ENCODE measurements at regions of chr11 and their contacts with region 1.

Region 1: GRCh38 chr11:123407130-123407995 is 22.7 kb upstream of the GRAMD1B start:
- DNase-seq: peak; percentile 41
- ATAC-seq: peak; percentile 83
- H3K4me3 Mint-ChIP-seq: peak overlapping the region; percentile 75
- H3K27ac Mint-ChIP-seq: peak overlapping the region; percentile 31
- H3K4me1 Mint-ChIP-seq: peaks cover 36% of the 10 kb centered on the region
- H3K27me3 Mint-ChIP-seq: no peaks in the 10 kb centered on the region

Region 2: GRCh38 chr11:123357961-123358841 is 49.2 kb before region 1 on chr11:
- POLR2A ChIA-PET with region 1: no interaction called
- DNase-seq: peak; percentile 68
- ATAC-seq: peak; percentile 92
- H3K4me3 Mint-ChIP-seq: peak overlapping the region; percentile 100
- H3K27ac Mint-ChIP-seq: peak overlapping the region; percentile 94
- H3K4me1 Mint-ChIP-seq: peaks cover 46% of the 10 kb centered on the region
- H3K27me3 Mint-ChIP-seq: peaks cover 18% of the 10 kb centered on the region

Region 3: DNA sequence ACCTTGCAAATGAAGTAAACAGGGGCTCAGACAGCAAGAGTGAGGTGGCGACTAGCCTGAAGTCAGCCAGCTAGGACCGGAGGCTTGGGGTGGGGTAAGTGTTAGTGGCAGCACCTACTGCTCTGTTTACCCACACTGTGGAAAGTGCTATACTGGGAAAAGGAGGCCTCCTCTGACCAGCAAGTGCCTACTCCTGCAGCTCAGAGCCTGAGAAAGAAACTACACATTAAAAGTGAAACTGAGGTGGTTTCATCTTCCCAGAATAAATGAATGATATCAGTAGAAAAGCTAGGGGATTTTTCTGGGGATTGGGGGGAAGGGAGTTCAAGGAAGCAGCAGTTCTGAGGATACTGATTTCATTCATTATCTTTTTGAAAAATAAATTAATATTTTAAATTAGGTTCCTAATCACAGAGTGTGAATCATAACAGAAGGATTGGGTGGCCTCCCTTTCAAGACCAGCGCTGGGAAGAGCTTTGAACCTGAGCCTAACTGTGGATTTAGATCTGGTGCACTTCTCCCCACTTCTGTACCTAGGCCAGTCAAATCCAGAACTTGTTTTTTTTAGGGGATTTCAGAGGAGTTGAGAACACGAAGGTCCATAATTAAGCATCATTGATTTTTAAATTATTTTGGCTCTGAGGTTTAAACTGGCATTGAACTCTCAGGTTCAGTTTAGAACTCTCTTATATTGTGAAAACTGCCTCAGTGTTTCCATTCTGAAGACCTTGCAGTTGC is 25.4 kb before region 1 on chr11:
- POLR2A ChIA-PET with region 1: no interaction called
- DNase-seq: peak; percentile 49
- ATAC-seq: peak; percentile 97
- H3K4me3 Mint-ChIP-seq: peak overlapping the region; percentile 63
- H3K27ac Mint-ChIP-seq: peak overlapping the region; percentile 81
- H3K4me1 Mint-ChIP-seq: peaks cover 25% of the 10 kb centered on the region
- H3K27me3 Mint-ChIP-seq: no peaks in the 10 kb centered on the region

Region 4: GRCh38 chr11:123478352-123478987 is 71.1 kb after region 1 on chr11:
- POLR2A ChIA-PET with region 1: interaction called, 10 read pairs
- DNase-seq: peak; percentile 47
- ATAC-seq: peak; percentile 15
- H3K4me3 Mint-ChIP-seq: peak overlapping the region; percentile 43
- H3K27ac Mint-ChIP-seq: peak overlapping the region; percentile 27
- H3K4me1 Mint-ChIP-seq: peaks cover 47% of the 10 kb centered on the region
- H3K27me3 Mint-ChIP-seq: no peaks in the 10 kb centered on the region

Measured in activated naive CD8-positive, alpha-beta T cell treated with anti-CD3 and anti-CD28 coated beads, Interleukin-2, amount 10 ng/mL, durations not matched to agents 7 days and 5 days (primary cell).